ENCODE measurements at regions of chr5 and their contacts with region 1.

Region 1: GRCh38 chr5:180126726-180127681 is 55.4 kb upstream of the RNF130 start:
- DNase-seq: peak; percentile 60
- ATAC-seq: peak; percentile 77

Region 2: GRCh38 chr5:180209137-180209581 is 82.2 kb after region 1 on chr5 and contains the start of gene RASGEF1C:
- intact Hi-C with region 1: loop called (anchors 5 kb)
- DNase-seq: peak; percentile 75
- ATAC-seq: peak; percentile 96
- total RNA-seq, gene RASGEF1C: 0.59 TPM

Region 3: DNA sequence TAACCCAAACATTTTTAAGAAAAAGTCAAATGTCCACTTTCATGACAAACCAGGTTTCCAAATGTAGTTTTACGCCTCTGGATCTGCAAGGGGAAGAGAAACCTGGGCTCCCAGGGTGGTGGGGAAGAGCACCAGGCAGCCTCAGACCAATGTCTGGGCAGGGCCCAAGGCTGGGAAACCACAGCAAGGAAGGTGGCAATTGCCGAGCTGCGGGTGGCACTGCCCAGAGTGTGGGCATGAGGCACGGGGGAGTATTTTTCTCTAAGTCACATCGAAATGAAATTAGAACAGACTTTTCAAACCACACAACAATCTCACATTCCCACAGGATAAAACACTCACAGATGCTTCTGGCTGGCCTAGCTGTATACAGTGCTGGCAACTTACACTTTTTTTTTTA is 114.6 kb after region 1 on chr5:
- intact Hi-C with region 1: no loop called
- DNase-seq: no peak
- ATAC-seq: no peak

Region 4: GRCh38 chr5:180328296-180329137 is 201.5 kb after region 1 on chr5:
- intact Hi-C with region 1: loop called (anchors 5 kb)
- DNase-seq: peak; percentile 92
- ATAC-seq: peak; percentile 62

Region 5: GRCh38 chr5:180470966-180471582 is 344.1 kb after region 1 on chr5:
- intact Hi-C with region 1: loop called (anchors 10 kb)
- DNase-seq: peak; percentile 64
- ATAC-seq: peak; percentile 84